Transverse colon (tissue), 4 donors: ENCODE measurements at regions of chr3 and their contacts with region 1.

Region 1: GRCh38 chr3:179015551-179016020 is 56.0 kb downstream of the ZMAT3 start:
- DNase-seq: peak; percentile 41
- H3K4me3 ChIP-seq: no peak overlapping the region
- H3K27ac ChIP-seq: no peak overlapping the region
- H3K4me1 ChIP-seq: peaks cover 0 to 10% (median 0%) of the 10 kb centered on the region in 4 donors
- H3K27me3 ChIP-seq: no peaks in the 10 kb centered on the region
- CTCF ChIP-seq: peak; percentile 76 to 92 (median 86)
- EP300 ChIP-seq: no peak
- POLR2A ChIP-seq: no peak

Region 2: GRCh38 chr3:179309225-179310078 is 293.9 kb after region 1 on chr3:
- in situ Hi-C with region 1: loop called in 3 of 4 experiments (anchors 10 kb)
- intact Hi-C with region 1: no loop called
- DNase-seq: no peak
- H3K4me3 ChIP-seq: no peak overlapping the region
- H3K27ac ChIP-seq: no peak overlapping the region
- H3K4me1 ChIP-seq: no peaks in the 10 kb centered on the region
- H3K27me3 ChIP-seq: no peaks in the 10 kb centered on the region
- CTCF ChIP-seq: no peak
- EP300 ChIP-seq: no peak
- POLR2A ChIP-seq: no peak

Region 3: GRCh38 chr3:179322286-179323196 is 307.0 kb after region 1 on chr3 and contains the start of gene ZNF639:
- in situ Hi-C with region 1: loop called in 3 of 4 experiments (anchors 5 to 10 kb)
- intact Hi-C with region 1: loop called (anchors 5 kb)
- DNase-seq: peak; percentile 83
- H3K4me3 ChIP-seq: peak within 1 kb of the TSS; percentile 77 to 90 (median 90)
- H3K27ac ChIP-seq: peak within 1 kb of the TSS; percentile 92 to 98 (median 97)
- H3K4me1 ChIP-seq: peaks cover 13 to 33% (median 22%) of the 10 kb centered on the region in 4 donors
- H3K27me3 ChIP-seq: no peaks in the 10 kb centered on the region
- CTCF ChIP-seq: peak; percentile 58 to 90 (median 78)
- EP300 ChIP-seq: no peak
- POLR2A ChIP-seq: no peak
- total RNA-seq, gene ZNF639: 9.0 to 42.1 (median 21.9) TPM